Thyroid gland (tissue), 4 donors: ENCODE measurements at regions of chr11 and their contacts with region 1.

Region 1: DNA sequence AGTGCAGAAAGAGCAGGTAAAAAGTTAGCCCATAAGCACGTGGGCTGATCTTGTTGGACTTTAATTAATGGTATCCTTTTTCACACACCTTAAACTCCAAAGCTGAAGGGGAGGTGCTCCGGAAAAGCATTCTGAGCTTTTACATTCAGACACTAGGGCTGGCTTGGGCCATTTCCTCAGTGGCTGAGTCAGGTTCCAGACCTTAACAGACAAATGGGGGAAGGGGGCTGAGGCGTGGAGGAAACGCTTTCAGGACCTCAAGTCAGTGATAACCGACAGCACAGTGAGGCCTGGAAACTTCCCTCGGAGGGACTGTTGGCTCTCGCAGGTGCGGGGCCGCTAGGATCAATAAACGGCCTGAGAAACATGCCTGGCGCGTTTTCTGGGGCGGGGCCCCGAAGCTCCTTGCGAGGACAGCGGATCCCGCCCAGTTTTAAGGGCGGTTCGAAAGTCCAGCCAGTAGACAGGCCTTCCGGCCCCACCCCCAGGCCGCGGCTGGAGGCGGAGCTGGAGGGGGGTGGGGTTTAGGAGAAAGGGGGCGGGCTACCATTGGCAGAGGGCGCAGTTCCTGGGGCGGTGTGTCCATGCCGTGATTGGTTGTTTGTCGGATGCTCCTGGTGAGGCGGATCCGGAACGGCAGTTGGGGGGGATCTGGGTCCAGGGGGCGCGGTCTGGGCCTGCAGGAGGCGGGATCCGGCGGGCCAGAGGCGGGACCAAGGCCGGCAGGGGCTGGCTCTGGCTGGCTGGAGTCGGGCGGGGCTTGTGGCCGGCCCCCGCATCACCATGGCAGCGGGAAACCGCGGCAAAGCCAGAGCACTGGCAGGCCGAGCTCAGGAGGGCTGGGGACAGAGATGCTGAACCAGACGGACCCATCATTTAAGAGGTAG is 8.0 kb downstream of the C11orf52 start:
- DNase-seq: peak; percentile 97
- H3K4me3 ChIP-seq: peak overlapping the region in 2 of 3 donors; percentile 25 to 30
- H3K27ac ChIP-seq: peak overlapping the region; percentile 86 to 95 (median 94)
- H3K4me1 ChIP-seq: peaks cover 29 to 39% of the 10 kb centered on the region in 2 donors
- H3K27me3 ChIP-seq: no peaks in the 10 kb centered on the region
- CTCF ChIP-seq: peak in 1 of 6 experiments; percentile 28
- POLR2A ChIP-seq: peak in 1 of 2 donors; percentile 90

Region 2: GRCh38 chr11:111797145-111797581 is 129.6 kb before region 1 on chr11:
- intact Hi-C with region 1: no loop called
- DNase-seq: no peak
- H3K4me3 ChIP-seq: no peak overlapping the region
- H3K27ac ChIP-seq: no peak overlapping the region
- H3K4me1 ChIP-seq: no peaks in the 10 kb centered on the region
- H3K27me3 ChIP-seq: no peaks in the 10 kb centered on the region
- CTCF ChIP-seq: no peak
- POLR2A ChIP-seq: no peak

Region 3: GRCh38 chr11:111878849-111879636 is 47.7 kb before region 1 on chr11 and contains the starts of genes CFAP68 and FDXACB1:
- intact Hi-C with region 1: loop called (anchors 5 kb)
- DNase-seq: peak; percentile 96 to 97
- H3K4me3 ChIP-seq: peak within 1 kb of the TSS; percentile 34 to 48 (median 41)
- H3K27ac ChIP-seq: peak within 1 kb of the TSS; percentile 94 to 99 (median 96)
- H3K4me1 ChIP-seq: peaks cover 3 to 18% of the 10 kb centered on the region in 2 donors
- H3K27me3 ChIP-seq: no peaks in the 10 kb centered on the region
- CTCF ChIP-seq: peak; percentile 92 to 100 (median 98)
- POLR2A ChIP-seq: peak in 1 of 2 donors; percentile 87
- total RNA-seq, gene CFAP68: 24.7 to 47.1 (median 38.0) TPM
- total RNA-seq, gene FDXACB1: 1.8 to 3.0 (median 2.8) TPM

Region 4: DNA sequence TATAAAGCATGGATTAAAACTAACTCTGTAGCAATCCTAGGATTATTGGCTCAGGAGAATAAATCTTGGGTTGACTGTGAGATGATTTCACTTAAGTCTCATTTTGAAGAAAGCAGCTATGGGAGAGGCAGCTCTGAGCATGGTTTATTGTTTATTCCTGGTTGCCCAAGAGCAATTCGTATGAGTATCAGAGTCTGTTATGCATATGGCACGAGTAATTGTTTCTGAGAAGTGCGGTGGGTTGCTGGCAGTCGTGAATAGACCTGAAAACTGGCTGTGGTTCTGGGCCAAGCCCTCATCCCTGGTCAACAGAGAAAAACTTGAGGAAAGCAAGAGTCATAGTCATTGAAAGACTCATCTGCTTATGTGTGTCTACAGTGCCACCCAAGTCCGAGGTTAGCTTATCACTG is 37.2 kb after region 1 on chr11:
- intact Hi-C with region 1: no loop called
- DNase-seq: no peak
- H3K4me3 ChIP-seq: no peak overlapping the region
- H3K27ac ChIP-seq: no peak overlapping the region
- H3K4me1 ChIP-seq: no peaks in the 10 kb centered on the region
- H3K27me3 ChIP-seq: no peaks in the 10 kb centered on the region
- CTCF ChIP-seq: no peak
- POLR2A ChIP-seq: no peak